Dorsolateral prefrontal cortex (tissue), 120 donors: ENCODE measurements at regions of chr7 and their contacts with region 1.

Region 1: DNA sequence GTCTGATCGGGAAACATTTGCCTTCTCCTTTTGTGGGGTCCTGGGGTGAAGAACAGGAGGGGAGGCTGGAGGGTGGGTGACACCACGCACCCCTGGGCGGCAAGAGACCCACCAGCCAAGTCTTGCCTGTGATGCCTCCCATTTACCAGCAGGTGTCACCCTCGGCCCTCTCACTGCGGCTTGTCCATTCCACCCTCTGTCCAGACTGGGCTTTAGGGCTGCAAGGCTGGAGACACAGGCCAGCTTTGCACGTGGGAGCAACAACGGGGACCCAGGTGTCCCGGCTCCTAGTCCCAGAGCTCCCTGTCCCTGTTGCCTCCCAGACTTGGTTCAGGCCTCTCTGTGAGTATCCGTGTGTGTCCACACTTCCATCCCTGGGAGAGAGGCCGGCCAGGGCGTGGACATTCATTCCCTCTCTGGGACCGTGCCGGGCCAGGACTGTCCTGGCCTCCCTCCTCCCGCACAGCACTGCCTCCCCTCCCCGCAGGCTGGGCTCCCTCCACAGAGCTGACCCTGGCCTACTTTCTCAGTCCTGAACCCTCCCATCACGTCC is 36.2 kb upstream of the GTF2IRD1 start:
- DNase-seq: peak; percentile 52 to 82 (median 67)
- H3K4me3 ChIP-seq: no peak overlapping the region
- H3K27ac ChIP-seq: peak overlapping the region in 1 of 59 donors; percentile 36
- H3K27me3 ChIP-seq: peaks cover 0 to 4% (median 0%) of the 10 kb centered on the region in 45 donors
- CTCF ChIP-seq: peak; percentile 70 to 100 (median 97)

Region 2: DNA sequence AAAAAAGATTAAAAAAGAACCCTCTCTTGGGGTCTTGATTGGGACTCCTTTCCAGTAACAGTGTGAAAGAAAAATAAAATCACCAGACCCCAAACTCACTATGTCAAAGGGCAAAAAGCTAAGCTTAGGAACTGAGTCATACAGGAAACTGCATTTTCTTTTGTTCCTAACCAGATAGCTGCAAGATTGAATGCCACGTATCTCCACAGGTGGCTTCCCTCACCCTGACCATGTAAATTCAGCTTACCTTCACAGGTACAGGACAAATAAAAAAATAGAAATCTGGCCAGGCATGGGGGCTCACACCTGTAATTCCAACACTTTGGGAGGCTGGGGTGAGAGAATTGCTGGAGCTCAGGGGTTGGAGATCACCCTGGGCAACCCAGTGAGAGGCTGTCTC is 275.8 kb before region 1 on chr7:
- intact Hi-C with region 1: no loop called
- DNase-seq: no peak
- H3K4me3 ChIP-seq: no peak overlapping the region
- H3K27ac ChIP-seq: no peak overlapping the region
- H3K27me3 ChIP-seq: no peaks in the 10 kb centered on the region
- CTCF ChIP-seq: no peak

Region 3: GRCh38 chr7:74449809-74450397 is 32.4 kb after region 1 on chr7:
- intact Hi-C with region 1: no loop called
- DNase-seq: peak in 3 of 10 donors; percentile 34 to 36 (median 34)
- H3K4me3 ChIP-seq: no peak overlapping the region
- H3K27ac ChIP-seq: no peak overlapping the region
- H3K27me3 ChIP-seq: no peaks in the 10 kb centered on the region
- CTCF ChIP-seq: peak; percentile 55 to 94 (median 83)

Region 4: DNA sequence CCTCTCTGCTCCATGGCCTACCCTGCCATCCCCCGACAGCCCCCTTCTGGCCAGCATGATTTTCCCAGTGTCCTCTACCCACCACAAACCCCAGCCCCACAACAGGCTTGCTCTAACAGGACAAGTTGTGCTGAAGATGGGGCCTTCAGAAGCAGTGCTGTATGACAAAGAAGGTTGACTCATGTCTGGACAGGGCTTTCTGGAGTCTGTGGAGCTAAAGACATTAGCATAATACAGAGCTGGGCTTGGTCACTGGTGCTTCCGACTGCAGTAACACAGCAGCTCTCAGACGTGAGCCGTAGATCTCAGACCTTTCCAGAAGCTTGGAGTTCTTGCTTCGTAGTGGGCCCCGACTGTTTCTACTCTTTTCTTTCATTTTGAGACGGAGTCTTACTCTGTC is 136.7 kb after region 1 on chr7:
- intact Hi-C with region 1: no loop called
- DNase-seq: no peak
- H3K4me3 ChIP-seq: no peak overlapping the region
- H3K27ac ChIP-seq: no peak overlapping the region
- H3K27me3 ChIP-seq: no peaks in the 10 kb centered on the region
- CTCF ChIP-seq: no peak

Region 5: GRCh38 chr7:74633451-74633921 is 216.0 kb after region 1 on chr7:
- intact Hi-C with region 1: loop called in 1 of 2 experiments (anchors 5 kb)
- DNase-seq: no peak
- H3K4me3 ChIP-seq: no peak overlapping the region
- H3K27ac ChIP-seq: no peak overlapping the region
- H3K27me3 ChIP-seq: no peaks in the 10 kb centered on the region
- CTCF ChIP-seq: no peak

Region 6: DNA sequence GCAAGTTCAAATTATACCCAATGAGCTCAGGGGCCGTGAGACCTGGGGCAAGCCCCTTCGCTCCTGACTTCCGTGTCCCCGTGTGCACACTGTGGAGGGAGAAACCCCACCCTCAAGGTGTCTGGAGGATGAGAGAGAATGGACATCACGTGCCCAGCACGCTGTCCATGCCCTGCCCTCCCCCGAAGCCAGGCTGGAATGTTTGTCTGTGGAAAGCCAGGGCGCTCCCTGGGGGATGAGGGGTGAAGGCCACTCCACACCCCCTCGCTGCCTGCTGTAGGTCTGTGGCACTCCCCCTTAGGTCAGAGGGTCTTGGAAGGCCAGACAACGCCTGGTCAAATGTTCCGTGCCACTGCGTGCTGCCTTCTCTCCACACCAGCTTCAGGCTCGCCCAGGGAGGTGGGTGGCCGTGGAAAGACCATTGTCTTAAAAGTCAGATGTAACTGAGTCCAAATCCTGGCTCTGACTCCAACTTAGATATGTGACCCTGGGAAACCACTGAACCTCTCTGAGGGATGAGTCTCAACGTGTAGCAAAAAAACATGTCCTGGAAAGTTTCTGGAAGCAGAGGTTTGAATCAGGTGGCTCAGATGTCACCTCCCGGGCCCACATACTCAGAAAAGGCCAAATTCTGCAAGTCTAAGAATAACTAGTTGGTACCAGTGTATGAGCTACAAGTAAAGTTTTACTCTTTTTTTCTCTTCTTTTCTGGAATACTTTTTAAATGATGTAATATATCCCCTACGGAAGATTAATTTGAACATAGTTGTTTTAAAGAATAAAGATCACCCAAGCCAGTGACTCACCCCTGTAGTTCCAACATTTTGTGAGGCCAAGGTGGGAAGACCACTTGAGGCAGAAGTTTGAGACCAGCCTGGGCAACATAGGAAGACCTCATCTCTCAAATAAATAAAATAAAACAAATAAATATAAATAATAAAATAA is 631.2 kb after region 1 on chr7:
- intact Hi-C with region 1: loop called in 1 of 2 experiments (anchors 10 kb)
- DNase-seq: no peak
- H3K4me3 ChIP-seq: no peak overlapping the region
- H3K27ac ChIP-seq: no peak overlapping the region
- H3K27me3 ChIP-seq: no peaks in the 10 kb centered on the region
- CTCF ChIP-seq: no peak